HepG2 (cell line): ENCODE measurements at regions of chr15 and their contacts with region 1.

Region 1: DNA sequence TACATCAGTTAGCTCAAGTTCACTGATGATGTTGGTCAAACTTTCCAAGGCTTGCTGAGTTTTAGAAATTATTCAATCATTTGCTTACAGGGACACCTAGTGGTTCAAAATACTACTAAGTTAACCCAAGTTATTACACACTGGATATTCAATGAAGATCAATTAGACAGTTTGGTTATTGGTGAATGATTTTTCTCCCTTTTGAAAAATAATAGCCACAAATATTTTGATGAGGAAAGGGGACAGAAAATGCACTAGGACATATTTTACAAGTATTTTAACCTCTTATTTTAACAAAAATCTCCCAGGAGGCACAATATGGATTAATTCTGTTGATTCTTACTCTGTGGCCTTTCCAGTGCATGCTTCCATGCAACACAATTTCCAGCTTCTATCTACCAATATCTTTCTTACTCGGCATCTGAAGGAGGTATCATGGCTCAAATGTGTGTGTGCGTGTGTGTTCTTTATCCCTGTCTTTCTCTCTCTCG is 20.1 kb upstream of the GOLGA6L2 start:
- DNase-seq: peak; percentile 23
- ATAC-seq: peak; percentile 57; the same call in 2 of the 3 replicates
- H3K4me3 ChIP-seq: no peak overlapping the region
- H3K27ac ChIP-seq: no peak overlapping the region
- H3K4me1 ChIP-seq: no peaks in the 10 kb centered on the region
- H3K27me3 ChIP-seq: no peaks in the 10 kb centered on the region; a peak in 1 of 5 replicates
- CTCF ChIP-seq: peak; percentile 65
- EP300 ChIP-seq: no peak
- POLR2A ChIP-seq: no peak
- RAD21 ChIP-seq: peak; percentile 42; the same call in 1 of the 2 replicates

Region 2: GRCh38 chr15:22956257-22956977 is 510.7 kb before region 1 on chr15:
- CTCF ChIA-PET with region 1: no interaction called
- POLR2A ChIA-PET with region 1: no interaction called
- in situ Hi-C with region 1: no loop called
- intact Hi-C with region 1: loop called (anchors 5 kb)
- DNase-seq: no peak
- ATAC-seq: no peak
- H3K4me3 ChIP-seq: no peak overlapping the region
- H3K27ac ChIP-seq: no peak overlapping the region
- H3K4me1 ChIP-seq: peaks cover 33% of the 10 kb centered on the region
- H3K27me3 ChIP-seq: no peaks in the 10 kb centered on the region
- CTCF ChIP-seq: no peak
- EP300 ChIP-seq: no peak
- POLR2A ChIP-seq: no peak
- RAD21 ChIP-seq: no peak